A673 (cell line): ENCODE measurements at regions of chr9 and their contacts with region 1.

Region 1: DNA sequence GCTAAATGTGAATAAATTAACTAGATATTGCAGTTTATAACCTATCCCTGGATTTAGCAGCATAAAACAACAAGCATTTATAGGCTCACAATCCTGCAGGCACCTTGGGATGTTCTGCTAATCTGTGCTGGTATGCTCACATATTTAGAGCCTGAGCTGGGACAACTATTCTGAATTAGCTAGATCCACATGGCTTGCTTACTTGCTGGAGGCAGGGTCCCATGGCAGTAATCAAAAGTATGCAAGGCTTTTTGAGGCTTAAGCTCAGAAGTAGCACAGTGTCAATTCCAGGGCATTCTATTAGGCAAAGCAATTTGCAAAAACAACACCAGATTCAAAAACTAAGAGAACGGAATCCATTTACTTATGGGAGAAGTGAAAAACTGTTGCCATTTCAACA is 745.0 kb upstream of the ACO1 start:
- DNase-seq: no peak
- H3K4me3 ChIP-seq: no peak overlapping the region
- H3K27ac ChIP-seq: no peak overlapping the region
- H3K4me1 ChIP-seq: no peaks in the 10 kb centered on the region
- H3K27me3 ChIP-seq: no peaks in the 10 kb centered on the region
- CTCF ChIP-seq: no peak

Region 2: GRCh38 chr9:31799953-31800609 is 160.6 kb after region 1 on chr9:
- CTCF ChIA-PET with region 1: no interaction called
- POLR2A ChIA-PET with region 1: no interaction called
- intact Hi-C with region 1: loop called (anchors 10 kb)
- DNase-seq: peak; percentile 76
- H3K4me3 ChIP-seq: no peak overlapping the region
- H3K27ac ChIP-seq: no peak overlapping the region
- H3K4me1 ChIP-seq: no peaks in the 10 kb centered on the region
- H3K27me3 ChIP-seq: no peaks in the 10 kb centered on the region
- CTCF ChIP-seq: peak; percentile 74